ENCODE measurements at regions of chr13 and their contacts with region 1.

Region 1: GRCh38 chr13:43094901-43095300 is 71.5 kb downstream of the DNAJC15 start:
- DNase-seq: no peak
- H3K4me3 Mint-ChIP-seq: no peak overlapping the region
- H3K27ac Mint-ChIP-seq: no peak overlapping the region
- H3K4me1 Mint-ChIP-seq: peaks cover 9% of the 10 kb centered on the region
- H3K27me3 Mint-ChIP-seq: no peaks in the 10 kb centered on the region
- CTCF ChIP-seq: no peak

Region 2: DNA sequence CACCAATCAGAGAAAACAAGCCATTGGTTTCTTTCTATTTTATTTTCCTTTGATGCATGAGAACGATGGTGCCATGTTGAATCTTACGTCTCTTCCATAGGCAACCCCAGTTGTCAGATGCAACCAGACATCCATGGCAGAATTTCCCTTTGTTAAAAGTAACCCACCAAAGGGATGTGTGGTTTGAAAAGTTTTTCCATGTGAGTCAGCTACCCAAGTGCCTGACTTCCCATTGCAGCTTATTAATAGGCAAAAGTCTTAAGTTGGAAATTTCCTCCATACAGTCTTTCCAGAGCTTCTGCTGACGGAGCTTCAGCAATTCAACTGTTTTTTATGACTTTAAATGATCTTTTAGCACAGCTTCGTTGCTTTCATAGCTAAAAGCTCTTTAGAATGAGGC is 387.3 kb before region 1 on chr13:
- CTCF ChIA-PET with region 1: interaction called, 10 read pairs
- intact Hi-C with region 1: no loop called
- DNase-seq: no peak
- H3K4me3 Mint-ChIP-seq: no peak overlapping the region
- H3K27ac Mint-ChIP-seq: no peak overlapping the region
- H3K4me1 Mint-ChIP-seq: no peaks in the 10 kb centered on the region
- H3K27me3 Mint-ChIP-seq: peaks cover 6% of the 10 kb centered on the region
- CTCF ChIP-seq: no peak

Region 3: GRCh38 chr13:43054803-43055802 is 39.8 kb before region 1 on chr13:
- CTCF ChIA-PET with region 1: no interaction called
- intact Hi-C with region 1: no loop called
- DNase-seq: peak; percentile 16
- H3K4me3 Mint-ChIP-seq: no peak overlapping the region
- H3K27ac Mint-ChIP-seq: no peak overlapping the region
- H3K4me1 Mint-ChIP-seq: peaks cover 39% of the 10 kb centered on the region
- H3K27me3 Mint-ChIP-seq: no peaks in the 10 kb centered on the region
- CTCF ChIP-seq: no peak

Measured in Calu3 (cell line).